IMR-90 (cell line): ENCODE measurements at regions of chr4 and their contacts with region 1.

Region 1: GRCh38 chr4:74770226-74770910 is 24.0 kb downstream of the BTC start:
- DNase-seq: no peak
- ATAC-seq: no peak
- H3K4me3 ChIP-seq: no peak overlapping the region
- H3K27ac ChIP-seq: no peak overlapping the region
- H3K4me1 ChIP-seq: no peaks in the 10 kb centered on the region
- H3K27me3 ChIP-seq: no peaks in the 10 kb centered on the region
- CTCF ChIP-seq: no peak
- POLR2A ChIP-seq: no peak
- RAD21 ChIP-seq: no peak

Region 2: GRCh38 chr4:74357994-74358393 is 412.4 kb before region 1 on chr4:
- CTCF ChIA-PET with region 1: no interaction called
- POLR2A ChIA-PET with region 1: no interaction called
- dilution Hi-C with region 1: no loop called
- in situ Hi-C with region 1: no loop called
- intact Hi-C with region 1: loop called (anchors 1 kb)
- DNase-seq: no peak
- ATAC-seq: no peak
- H3K4me3 ChIP-seq: no peak overlapping the region
- H3K27ac ChIP-seq: no peak overlapping the region
- H3K4me1 ChIP-seq: no peaks in the 10 kb centered on the region
- H3K27me3 ChIP-seq: no peaks in the 10 kb centered on the region
- CTCF ChIP-seq: no peak
- POLR2A ChIP-seq: no peak
- RAD21 ChIP-seq: no peak

Region 3: GRCh38 chr4:74944328-74944793 is 174.0 kb after region 1 on chr4:
- CTCF ChIA-PET with region 1: no interaction called
- POLR2A ChIA-PET with region 1: no interaction called
- dilution Hi-C with region 1: no loop called
- in situ Hi-C with region 1: no loop called
- intact Hi-C with region 1: no loop called
- DNase-seq: no peak
- ATAC-seq: no peak
- H3K4me3 ChIP-seq: no peak overlapping the region
- H3K27ac ChIP-seq: no peak overlapping the region
- H3K4me1 ChIP-seq: no peaks in the 10 kb centered on the region
- H3K27me3 ChIP-seq: no peaks in the 10 kb centered on the region
- CTCF ChIP-seq: no peak
- POLR2A ChIP-seq: no peak
- RAD21 ChIP-seq: no peak